BJ (cell line): ENCODE measurements at regions of chr17 and their contacts with region 1.

Region 1: DNA sequence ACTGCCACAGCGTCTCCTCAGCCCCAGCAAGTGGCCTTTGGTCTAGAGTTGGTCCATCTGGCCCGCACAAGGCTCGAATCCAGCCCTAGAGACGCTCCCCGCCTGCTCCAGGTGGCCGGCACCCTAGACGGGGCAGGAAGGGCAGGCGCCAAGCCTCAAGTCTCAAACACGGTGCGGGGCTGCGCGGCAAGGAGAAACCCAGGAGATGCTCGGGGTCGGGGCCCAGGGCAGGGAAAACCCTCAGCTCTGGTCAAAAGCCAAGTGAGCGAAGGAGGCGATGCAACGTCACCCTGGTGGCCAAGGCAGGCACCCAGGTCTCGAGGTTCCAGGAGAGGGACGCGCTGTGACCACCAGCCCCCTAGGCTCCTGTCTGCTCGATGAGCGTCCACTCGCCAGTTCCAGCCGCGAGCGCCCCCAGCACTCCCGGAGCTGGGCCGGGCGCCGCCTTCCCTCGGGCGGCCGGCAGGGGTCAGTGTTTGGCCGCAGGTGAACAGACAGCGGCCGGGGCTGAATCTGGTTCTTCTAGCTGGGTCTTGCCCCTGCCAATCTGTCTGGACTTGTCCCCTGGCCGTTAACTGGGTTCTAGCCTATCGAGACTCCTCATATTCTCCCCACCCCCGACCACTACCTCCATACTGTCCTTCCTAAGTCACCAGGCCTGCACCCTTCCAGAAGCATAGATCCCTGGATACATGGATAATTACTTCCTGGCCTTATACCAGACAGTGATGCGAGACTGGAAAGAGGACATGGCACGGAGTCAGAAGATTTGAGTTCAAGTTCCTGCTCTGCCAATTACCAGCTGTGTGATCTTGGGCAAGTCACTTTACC is 44.0 kb downstream of the PRAC1 start:
- DNase-seq: no peak
- H3K4me3 ChIP-seq: peak overlapping the region; percentile 16; the same call in 1 of the 2 replicates
- H3K27me3 ChIP-seq: peaks cover 9% of the 10 kb centered on the region
- CTCF ChIP-seq: peak; percentile 96

Region 2: GRCh38 chr17:48663134-48663924 is 15.0 kb before region 1 on chr17:
- CTCF ChIA-PET with region 1: interaction called, 24 read pairs
- POLR2A ChIA-PET with region 1: no interaction called
- DNase-seq: no peak
- H3K4me3 ChIP-seq: no peak overlapping the region
- H3K27me3 ChIP-seq: peaks cover 11% of the 10 kb centered on the region
- CTCF ChIP-seq: 0 out of 2 replicates have a peak, but pooled peaks have one; percentile 9

Region 3: DNA sequence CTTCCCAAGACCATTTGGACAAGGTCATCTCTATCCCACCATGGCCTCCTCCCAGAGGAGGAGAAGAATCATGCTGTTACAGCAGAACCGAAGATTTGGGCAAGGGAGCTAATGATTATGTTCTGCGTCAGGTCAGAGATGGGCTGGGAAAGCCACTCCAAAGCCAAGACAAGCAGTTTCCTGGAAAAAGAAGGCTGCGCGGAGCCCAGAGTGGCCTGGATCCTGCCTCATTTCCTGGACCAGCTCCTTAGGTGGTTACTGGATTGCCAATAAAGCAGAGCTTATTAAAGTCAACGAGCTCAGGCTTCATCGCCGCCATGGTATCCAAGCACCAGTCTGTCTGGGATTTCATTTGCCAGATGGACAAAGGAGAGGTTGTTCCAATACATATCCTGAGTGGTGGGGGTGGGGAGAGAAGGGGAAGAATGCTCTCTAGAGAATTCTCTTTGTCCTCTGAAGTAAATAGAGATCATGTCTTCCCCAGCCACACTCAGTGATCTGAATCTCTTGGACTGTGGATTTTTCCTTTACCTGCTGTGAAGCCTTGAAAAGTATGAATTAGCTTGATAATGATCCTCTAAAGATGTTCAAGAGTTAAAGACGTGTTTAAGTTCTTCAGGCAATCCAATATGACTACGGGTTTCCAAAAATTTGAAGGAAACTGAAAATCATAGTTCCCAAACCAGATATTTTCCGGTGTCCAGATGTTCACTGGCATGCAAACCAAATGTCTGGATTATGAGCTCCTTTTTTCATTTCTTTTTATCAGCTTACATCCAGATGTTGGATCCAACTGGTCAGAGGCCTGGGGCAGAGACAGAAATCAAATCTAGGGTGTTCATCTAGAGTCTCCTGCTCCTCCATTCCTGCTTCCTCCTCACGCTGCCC is 26.2 kb after region 1 on chr17:
- CTCF ChIA-PET with region 1: interaction called, 12 read pairs
- POLR2A ChIA-PET with region 1: no interaction called
- DNase-seq: no peak
- H3K4me3 ChIP-seq: no peak overlapping the region
- H3K27me3 ChIP-seq: peaks cover 14% of the 10 kb centered on the region
- CTCF ChIP-seq: no peak

Region 4: GRCh38 chr17:48718761-48719641 is 40.6 kb after region 1 on chr17:
- CTCF ChIA-PET with region 1: interaction called, 35 read pairs
- POLR2A ChIA-PET with region 1: no interaction called
- DNase-seq: no peak
- H3K4me3 ChIP-seq: peak overlapping the region; percentile 15
- H3K27me3 ChIP-seq: peaks cover 41% of the 10 kb centered on the region
- CTCF ChIP-seq: no peak

Region 5: GRCh38 chr17:48767263-48767774 is 89.0 kb after region 1 on chr17:
- CTCF ChIA-PET with region 1: no interaction called
- POLR2A ChIA-PET with region 1: no interaction called
- DNase-seq: no peak
- H3K4me3 ChIP-seq: no peak overlapping the region
- H3K27me3 ChIP-seq: peaks cover 10% of the 10 kb centered on the region
- CTCF ChIP-seq: no peak

Region 6: GRCh38 chr17:48804925-48805411 is 126.6 kb after region 1 on chr17:
- CTCF ChIA-PET with region 1: interaction called, 14 read pairs
- POLR2A ChIA-PET with region 1: no interaction called
- DNase-seq: no peak
- H3K4me3 ChIP-seq: no peak overlapping the region
- H3K27me3 ChIP-seq: peaks cover under 1% of the 10 kb centered on the region
- CTCF ChIP-seq: peak; percentile 97